Spleen (tissue), 13 donors: ENCODE measurements at regions of chr19 and their contacts with region 1.

Region 1: GRCh38 chr19:45047188-45047797 is 8.4 kb downstream of the CLASRP start:
- DNase-seq: no peak
- H3K4me3 ChIP-seq: peak overlapping the region in 3 of 8 donors; percentile 16 to 45 (median 20)
- H3K27ac ChIP-seq: peak overlapping the region in 7 of 8 donors; percentile 49 to 86 (median 80)
- H3K4me1 ChIP-seq: peaks cover 16 to 96% (median 83%) of the 10 kb centered on the region in 6 donors
- H3K27me3 ChIP-seq: no peaks in the 10 kb centered on the region
- CTCF ChIP-seq: peak in 1 of 11 experiments; percentile 28
- POLR2A ChIP-seq: no peak

Region 2: DNA sequence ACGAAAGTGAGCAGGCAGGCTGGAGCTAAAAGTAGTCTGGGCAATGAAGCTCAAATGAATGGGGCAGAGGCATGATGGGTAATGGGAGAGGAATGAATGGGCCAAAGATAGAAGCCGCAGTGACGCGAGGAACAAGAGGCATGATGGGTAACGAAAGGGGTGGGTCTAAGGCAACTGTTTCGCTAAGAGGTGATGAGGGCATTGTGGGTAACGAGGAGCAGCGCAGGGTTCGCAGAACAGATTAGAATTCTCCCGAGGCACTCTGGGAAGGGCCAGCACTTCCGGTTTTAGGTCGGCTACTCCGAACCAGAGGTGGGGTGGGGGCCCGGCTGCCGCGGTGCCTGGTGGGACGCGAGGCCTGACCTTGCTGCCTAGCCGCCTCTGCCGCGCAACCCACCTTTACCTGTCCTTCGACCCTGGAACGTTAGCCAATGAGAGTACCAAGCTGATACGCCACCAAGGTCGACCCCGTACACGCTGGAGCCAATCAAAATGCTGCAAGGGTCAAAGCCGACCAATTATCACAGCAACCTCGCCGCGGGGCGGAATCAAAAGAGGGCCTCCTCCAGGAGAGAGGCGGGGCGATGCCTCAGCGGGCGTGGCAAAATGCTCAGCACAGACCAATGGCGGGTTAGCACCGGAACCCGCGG is 156.8 kb before region 1 on chr19:
- intact Hi-C with region 1: loop called (anchors 10 kb)
- DNase-seq: peak; percentile 99
- H3K4me3 ChIP-seq: peak overlapping the region; percentile 39 to 100 (median 73)
- H3K27ac ChIP-seq: peak overlapping the region; percentile 76 to 98 (median 96)
- H3K4me1 ChIP-seq: peaks cover 20 to 35% (median 25%) of the 10 kb centered on the region in 6 donors
- H3K27me3 ChIP-seq: no peaks in the 10 kb centered on the region
- CTCF ChIP-seq: peak in 2 of 11 experiments; percentile 25 to 26
- POLR2A ChIP-seq: no peak